H1 (cell line): ENCODE measurements at regions of chr9 and their contacts with region 1.

Region 1: DNA sequence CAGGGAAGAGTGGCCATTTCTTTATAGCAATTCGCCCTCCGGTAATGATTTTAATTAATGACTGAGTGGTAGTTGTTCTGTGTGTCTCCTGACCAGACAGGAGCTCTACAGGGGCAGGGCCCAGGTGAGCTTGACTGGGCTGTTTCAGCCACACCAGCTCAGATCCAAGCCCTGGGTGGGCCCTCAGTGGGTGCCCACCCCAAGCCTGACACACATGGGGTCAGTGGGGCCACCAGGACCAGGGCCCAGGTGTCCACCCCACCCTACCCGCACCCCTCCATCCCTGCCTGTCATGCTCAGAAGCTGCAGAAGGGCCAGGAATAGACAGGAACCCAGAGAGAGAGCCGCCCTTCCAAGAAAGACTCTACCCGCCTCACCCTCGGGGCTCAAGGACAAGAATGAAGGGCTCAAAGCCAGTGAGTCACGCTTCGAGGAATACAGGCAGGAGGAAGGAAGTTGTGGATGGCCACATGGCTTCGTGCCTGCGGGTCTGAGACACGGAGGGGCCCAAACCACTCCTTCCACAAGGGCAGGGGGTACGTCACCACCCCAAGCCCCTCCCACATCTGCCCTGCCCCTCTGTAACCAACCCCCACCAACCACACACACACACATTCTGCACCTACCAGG is 56.2 kb upstream of the STXBP1 start:
- DNase-seq: no peak
- H3K4me3 ChIP-seq: no peak overlapping the region
- H3K27ac ChIP-seq: peak overlapping the region; percentile 35; the same call in 1 of the 2 replicates
- H3K4me1 ChIP-seq: peaks cover 0 to 20% (median 12%) of the 10 kb centered on the region in 4 experiments; a peak in 6 of 7 replicates
- H3K27me3 ChIP-seq: no peaks in the 10 kb centered on the region
- CTCF ChIP-seq: no peak
- EP300 ChIP-seq: no peak
- POLR2A ChIP-seq: no peak
- RAD21 ChIP-seq: no peak

Region 2: DNA sequence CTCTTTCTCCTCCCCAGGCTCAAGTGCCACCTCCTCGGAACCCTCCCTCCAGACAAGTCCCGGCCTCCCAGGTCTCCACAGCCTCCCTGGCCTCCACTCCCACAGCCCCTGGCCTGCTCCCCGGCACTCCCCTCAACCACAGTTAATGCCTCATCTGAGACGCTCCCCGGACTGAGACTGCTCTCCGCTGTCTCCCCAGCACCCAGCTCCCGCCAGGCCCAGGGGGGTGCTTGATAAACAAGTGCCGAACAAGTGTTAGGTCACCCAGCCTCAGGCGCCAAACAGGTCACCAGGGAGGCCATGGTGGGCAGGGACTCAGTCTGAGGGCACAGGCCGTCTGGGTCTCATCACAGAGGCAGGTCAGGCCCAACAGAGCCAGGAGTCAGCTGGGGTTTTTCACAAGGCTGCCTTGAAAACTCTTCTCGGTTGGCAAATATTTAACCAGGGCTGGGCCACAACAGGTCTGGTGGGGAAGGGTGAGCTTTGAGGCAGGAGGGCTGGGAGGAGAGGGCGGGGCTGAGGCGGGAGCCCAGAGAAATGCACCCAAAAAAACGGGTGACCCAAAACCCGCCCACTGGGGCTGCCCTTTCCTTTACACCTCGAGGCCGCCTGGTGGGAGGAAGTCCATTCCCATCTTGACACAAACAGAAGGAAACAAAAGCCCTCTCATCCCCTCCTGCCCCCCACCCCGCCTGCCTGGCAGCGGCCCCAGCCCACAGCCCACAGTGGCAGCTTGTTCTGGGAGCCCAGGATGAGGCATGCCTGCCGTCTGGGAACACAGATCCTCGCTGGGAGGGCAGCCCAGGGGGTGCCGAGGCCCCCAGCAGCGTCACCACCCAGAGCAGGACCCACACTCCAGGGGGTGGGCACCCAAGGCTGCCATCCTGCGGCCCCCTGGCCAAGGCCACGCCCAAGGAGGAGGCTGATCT is 10.4 kb before region 1 on chr9:
- CTCF ChIA-PET with region 1: interaction called, 33 read pairs
- POLR2A ChIA-PET with region 1: interaction called, 5 read pairs
- DNase-seq: no peak
- H3K4me3 ChIP-seq: no peak overlapping the region
- H3K27ac ChIP-seq: peak overlapping the region; percentile 18; the same call in 1 of the 2 replicates
- H3K4me1 ChIP-seq: peaks cover 0 to 20% (median 8%) of the 10 kb centered on the region in 4 experiments; a peak in 5 of 7 replicates
- H3K27me3 ChIP-seq: no peaks in the 10 kb centered on the region
- CTCF ChIP-seq: no peak
- EP300 ChIP-seq: no peak
- POLR2A ChIP-seq: no peak
- RAD21 ChIP-seq: no peak

Region 3: GRCh38 chr9:127568971-127569885 is 13.3 kb after region 1 on chr9:
- CTCF ChIA-PET with region 1: interaction called, 4 read pairs
- POLR2A ChIA-PET with region 1: interaction called, 14 read pairs
- DNase-seq: peak in 1 of 2 experiments; percentile 83
- H3K4me3 ChIP-seq: peak overlapping the region; percentile 57 to 93 (median 76)
- H3K27ac ChIP-seq: peak overlapping the region; percentile 77; the same call in 1 of the 2 replicates
- H3K4me1 ChIP-seq: peaks cover 0 to 16% (median 15%) of the 10 kb centered on the region in 4 experiments; a peak in 6 of 7 replicates
- H3K27me3 ChIP-seq: peaks cover 0 to 5% (median 2%) of the 10 kb centered on the region in 4 experiments; a peak in 3 of 7 replicates
- CTCF ChIP-seq: no peak
- EP300 ChIP-seq: no peak
- POLR2A ChIP-seq: peak in 1 of 2 experiments; percentile 64; a peak in 2 of 3 replicates
- RAD21 ChIP-seq: no peak